RWPE1 (cell line): ENCODE measurements at regions of chr5 and their contacts with region 1.

Region 1: GRCh38 chr5:111159845-111160244 is 64.3 kb upstream of the CAMK4 start:
- DNase-seq: no peak
- H3K27ac ChIP-seq: no peak overlapping the region
- CTCF ChIP-seq: no peak

Region 2: GRCh38 chr5:111439473-111440075 is 279.7 kb after region 1 on chr5:
- CTCF ChIA-PET with region 1: interaction called, 10 read pairs
- POLR2A ChIA-PET with region 1: no interaction called
- DNase-seq: peak; percentile 34
- H3K27ac ChIP-seq: no peak overlapping the region
- CTCF ChIP-seq: no peak